CD4-positive, alpha-beta memory T cell (primary cell): ENCODE measurements at regions of chr9 and their contacts with region 1.

Region 1: GRCh38 chr9:16265688-16266087 is 604.8 kb downstream of the BNC2 start:
- DNase-seq: no peak
- H3K4me3 ChIP-seq: no peak overlapping the region
- H3K4me3 Mint-ChIP-seq: no peak overlapping the region
- H3K27ac ChIP-seq: no peak overlapping the region
- H3K27ac Mint-ChIP-seq: no peak overlapping the region
- H3K4me1 ChIP-seq: no peaks in the 10 kb centered on the region
- H3K4me1 Mint-ChIP-seq: peaks cover 0 to 2% (median 0%) of the 10 kb centered on the region in 4 donors
- H3K27me3 ChIP-seq: no peaks in the 10 kb centered on the region
- H3K27me3 Mint-ChIP-seq: peaks cover 0 to 3% of the 10 kb centered on the region in 2 donors

Region 2: GRCh38 chr9:16245756-16246440 is 19.8 kb before region 1 on chr9:
- CTCF ChIA-PET with region 1: no interaction called
- POLR2A ChIA-PET with region 1: no interaction called
- intact Hi-C with region 1: loop called (anchors 2 kb)
- DNase-seq: no peak
- H3K4me3 ChIP-seq: no peak overlapping the region
- H3K4me3 Mint-ChIP-seq: no peak overlapping the region
- H3K27ac ChIP-seq: no peak overlapping the region
- H3K27ac Mint-ChIP-seq: no peak overlapping the region
- H3K4me1 ChIP-seq: no peaks in the 10 kb centered on the region
- H3K4me1 Mint-ChIP-seq: no peaks in the 10 kb centered on the region
- H3K27me3 ChIP-seq: no peaks in the 10 kb centered on the region
- H3K27me3 Mint-ChIP-seq: no peaks in the 10 kb centered on the region

Region 3: GRCh38 chr9:16364347-16364746 is 98.7 kb after region 1 on chr9:
- CTCF ChIA-PET with region 1: no interaction called
- POLR2A ChIA-PET with region 1: no interaction called
- intact Hi-C with region 1: no loop called
- DNase-seq: no peak
- H3K4me3 ChIP-seq: no peak overlapping the region
- H3K4me3 Mint-ChIP-seq: no peak overlapping the region
- H3K27ac ChIP-seq: no peak overlapping the region
- H3K27ac Mint-ChIP-seq: no peak overlapping the region
- H3K4me1 ChIP-seq: no peaks in the 10 kb centered on the region
- H3K4me1 Mint-ChIP-seq: no peaks in the 10 kb centered on the region
- H3K27me3 ChIP-seq: no peaks in the 10 kb centered on the region
- H3K27me3 Mint-ChIP-seq: no peaks in the 10 kb centered on the region